Left ventricle myocardium inferior (tissue), 1 donor: ENCODE measurements at regions of chr3 and their contacts with region 1.

Region 1: DNA sequence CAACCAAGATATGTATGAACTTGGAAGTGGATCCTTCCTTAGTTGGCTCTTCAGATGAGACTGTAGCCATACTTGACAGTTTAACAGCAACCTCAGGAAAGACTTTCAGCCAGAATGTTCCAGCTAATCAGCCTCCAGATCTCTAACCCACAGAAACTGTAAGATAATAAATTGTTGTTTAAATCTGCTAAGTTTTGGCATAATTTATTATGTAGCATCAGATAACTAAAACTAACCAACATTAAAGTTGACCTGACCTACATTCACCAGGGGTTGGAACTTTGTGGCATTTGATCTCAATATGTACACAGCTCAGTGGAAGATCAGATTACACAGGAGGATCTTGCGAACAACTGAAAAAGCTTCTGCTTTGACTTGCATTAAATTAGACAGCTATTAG is 91.3 kb upstream of the POU1F1 start:
- DNase-seq: no peak
- H3K4me3 ChIP-seq: no peak overlapping the region
- H3K27ac ChIP-seq: no peak overlapping the region
- H3K4me1 ChIP-seq: no peaks in the 10 kb centered on the region
- H3K27me3 ChIP-seq: no peaks in the 10 kb centered on the region
- CTCF ChIP-seq: no peak

Region 2: GRCh38 chr3:87410110-87410509 is 42.4 kb after region 1 on chr3:
- intact Hi-C with region 1: loop called (anchors 5 kb)
- DNase-seq: no peak
- H3K4me3 ChIP-seq: no peak overlapping the region
- H3K27ac ChIP-seq: no peak overlapping the region
- H3K4me1 ChIP-seq: no peaks in the 10 kb centered on the region
- H3K27me3 ChIP-seq: no peaks in the 10 kb centered on the region
- CTCF ChIP-seq: no peak

Region 3: GRCh38 chr3:87581240-87581877 is 213.7 kb after region 1 on chr3:
- intact Hi-C with region 1: no loop called
- DNase-seq: no peak
- H3K4me3 ChIP-seq: no peak overlapping the region
- H3K27ac ChIP-seq: no peak overlapping the region
- H3K4me1 ChIP-seq: no peaks in the 10 kb centered on the region
- H3K27me3 ChIP-seq: no peaks in the 10 kb centered on the region
- CTCF ChIP-seq: no peak